Activated CD4-positive, alpha-beta memory T cell treated with anti-CD3 and anti-CD28 coated beads for 36 hours (primary cell): ENCODE measurements at regions of chr2 and their contacts with region 1.

Region 1: DNA sequence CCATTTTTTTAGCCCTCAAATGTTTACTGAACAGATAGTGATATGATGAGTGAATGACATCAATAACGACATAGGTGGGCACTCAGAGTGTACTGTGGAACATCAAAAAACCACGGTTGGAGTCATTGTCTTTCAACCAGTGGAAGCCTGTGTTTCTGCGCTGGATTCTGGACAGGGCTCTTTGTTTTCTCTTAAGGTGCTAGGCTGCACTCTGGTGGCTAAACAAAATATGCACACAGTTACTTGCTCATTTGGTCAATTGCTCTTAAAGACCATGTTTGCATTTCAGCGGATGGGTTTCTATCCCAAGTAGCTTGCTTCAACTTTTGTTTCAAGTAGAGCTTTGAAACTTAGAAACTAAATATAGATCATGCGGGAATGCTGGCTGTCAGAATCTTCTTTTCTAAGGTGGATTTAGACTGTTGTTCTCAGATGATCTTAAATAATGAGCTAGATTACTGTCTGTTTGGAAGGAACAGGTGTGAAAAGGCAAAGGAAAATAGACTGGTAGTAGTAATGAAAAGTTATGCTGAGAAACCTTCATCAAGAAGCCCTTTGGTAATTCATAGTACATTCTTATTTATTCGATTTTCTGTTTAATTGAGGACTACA is 48.5 kb upstream of the LYPD6B start:
- DNase-seq: peak; percentile 55
- H3K4me3 Mint-ChIP-seq: no peak overlapping the region
- H3K27ac Mint-ChIP-seq: no peak overlapping the region
- H3K4me1 Mint-ChIP-seq: peaks cover 2% of the 10 kb centered on the region
- H3K27me3 Mint-ChIP-seq: no peaks in the 10 kb centered on the region

Region 2: GRCh38 chr2:147937744-147938349 is 1052.1 kb before region 1 on chr2:
- CTCF ChIA-PET with region 1: interaction called, 10 read pairs
- POLR2A ChIA-PET with region 1: no interaction called
- intact Hi-C with region 1: loop called (anchors 1 kb)
- DNase-seq: no peak
- H3K4me3 Mint-ChIP-seq: no peak overlapping the region
- H3K27ac Mint-ChIP-seq: no peak overlapping the region
- H3K4me1 Mint-ChIP-seq: no peaks in the 10 kb centered on the region
- H3K27me3 Mint-ChIP-seq: no peaks in the 10 kb centered on the region

Region 3: GRCh38 chr2:147989809-147990403 is 1000.1 kb before region 1 on chr2:
- CTCF ChIA-PET with region 1: interaction called, 8 read pairs
- POLR2A ChIA-PET with region 1: no interaction called
- intact Hi-C with region 1: loop called (anchors 5 kb)
- DNase-seq: no peak
- H3K4me3 Mint-ChIP-seq: no peak overlapping the region
- H3K27ac Mint-ChIP-seq: no peak overlapping the region
- H3K4me1 Mint-ChIP-seq: peaks cover 3% of the 10 kb centered on the region
- H3K27me3 Mint-ChIP-seq: no peaks in the 10 kb centered on the region

Region 4: DNA sequence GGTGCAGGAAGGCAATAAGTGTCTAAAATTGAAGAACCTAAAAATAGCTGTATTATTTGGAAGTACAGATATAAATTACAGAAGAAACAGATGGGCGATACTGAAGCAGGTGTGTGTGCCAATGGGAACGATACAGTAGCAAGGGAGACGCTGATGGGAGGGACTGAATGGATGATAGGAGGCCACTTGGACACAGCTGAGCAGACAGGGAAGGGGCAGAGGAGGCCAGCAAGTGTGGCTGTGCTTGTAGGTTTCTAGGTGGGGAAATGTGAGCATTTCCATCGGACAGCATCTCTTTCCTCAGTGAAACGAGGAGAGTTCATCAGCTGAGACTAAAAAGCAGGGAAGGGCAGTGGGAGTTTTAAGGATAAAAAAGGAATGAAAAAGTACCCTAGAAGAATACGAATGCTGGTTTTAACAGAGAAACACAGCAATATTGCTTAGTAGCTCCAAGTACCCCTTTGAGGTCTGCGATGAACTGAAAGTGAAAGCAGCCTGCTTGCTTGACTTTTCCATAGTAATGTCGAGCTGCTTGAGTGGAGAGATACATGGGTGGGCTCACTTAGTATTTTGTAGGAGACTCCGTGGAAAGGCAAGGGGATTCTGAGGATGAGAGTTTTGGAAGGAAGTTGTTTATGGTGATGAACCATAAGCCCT is 437.2 kb before region 1 on chr2:
- CTCF ChIA-PET with region 1: no interaction called
- POLR2A ChIA-PET with region 1: no interaction called
- intact Hi-C with region 1: loop called (anchors 10 kb)
- DNase-seq: peak; percentile 36
- H3K4me3 Mint-ChIP-seq: no peak overlapping the region
- H3K27ac Mint-ChIP-seq: no peak overlapping the region
- H3K4me1 Mint-ChIP-seq: peaks cover 4% of the 10 kb centered on the region
- H3K27me3 Mint-ChIP-seq: no peaks in the 10 kb centered on the region

Region 5: GRCh38 chr2:148926291-148926961 is 63.6 kb before region 1 on chr2:
- CTCF ChIA-PET with region 1: no interaction called
- POLR2A ChIA-PET with region 1: no interaction called
- intact Hi-C with region 1: loop called (anchors 5 kb)
- DNase-seq: peak; percentile 68
- H3K4me3 Mint-ChIP-seq: peak overlapping the region; percentile 77
- H3K27ac Mint-ChIP-seq: peak overlapping the region; percentile 61
- H3K4me1 Mint-ChIP-seq: peaks cover 18% of the 10 kb centered on the region
- H3K27me3 Mint-ChIP-seq: no peaks in the 10 kb centered on the region

Region 6: DNA sequence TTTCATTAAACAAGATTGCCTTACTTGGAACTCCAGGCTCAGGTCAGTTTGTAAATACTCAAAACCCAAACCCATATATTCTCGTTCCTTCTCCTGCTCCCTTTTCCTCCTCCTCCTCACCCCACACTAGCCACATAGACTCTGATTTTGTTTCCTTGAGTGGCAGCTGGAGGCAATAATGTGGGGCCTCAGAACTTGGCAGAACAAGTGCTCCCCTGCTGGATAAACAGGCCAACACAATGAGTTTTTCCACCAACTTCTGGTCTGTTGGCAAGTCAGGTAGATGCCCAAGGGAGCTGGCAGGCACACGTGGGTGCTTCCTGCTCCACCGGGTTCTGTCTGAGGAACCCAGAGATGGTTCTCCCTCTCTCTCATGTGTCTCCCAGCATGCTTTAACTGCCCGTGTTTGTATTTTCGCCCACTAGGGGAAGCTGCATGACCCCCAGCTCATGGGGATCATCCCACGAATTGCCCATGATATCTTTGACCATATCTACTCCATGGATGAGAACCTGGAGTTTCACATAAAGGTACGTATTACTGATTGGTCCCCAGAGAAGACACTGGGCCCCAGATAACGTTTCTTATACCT is 53.0 kb before region 1 on chr2:
- CTCF ChIA-PET with region 1: no interaction called
- POLR2A ChIA-PET with region 1: no interaction called
- intact Hi-C with region 1: no loop called
- DNase-seq: no peak
- H3K4me3 Mint-ChIP-seq: no peak overlapping the region
- H3K27ac Mint-ChIP-seq: no peak overlapping the region
- H3K4me1 Mint-ChIP-seq: no peaks in the 10 kb centered on the region
- H3K27me3 Mint-ChIP-seq: no peaks in the 10 kb centered on the region

Region 7: GRCh38 chr2:149050188-149050587 is 60.2 kb after region 1 on chr2:
- CTCF ChIA-PET with region 1: no interaction called
- POLR2A ChIA-PET with region 1: no interaction called
- intact Hi-C with region 1: no loop called
- DNase-seq: no peak
- H3K4me3 Mint-ChIP-seq: no peak overlapping the region
- H3K27ac Mint-ChIP-seq: no peak overlapping the region
- H3K4me1 Mint-ChIP-seq: no peaks in the 10 kb centered on the region
- H3K27me3 Mint-ChIP-seq: peaks cover 16% of the 10 kb centered on the region